ENCODE measurements at regions of chr7 and their contacts with region 1.

Region 1: GRCh38 chr7:51224811-51225612 is 91.6 kb downstream of the COBL start:
- DNase-seq: peak in 2 of 4 experiments; percentile 10 to 20
- ATAC-seq: peak; percentile 42; the same call in 1 of the 3 replicates
- H3K4me3 ChIP-seq: no peak overlapping the region
- H3K27ac ChIP-seq: no peak overlapping the region
- H3K4me1 ChIP-seq: no peaks in the 10 kb centered on the region
- H3K27me3 ChIP-seq: peaks cover 17 to 55% of the 10 kb centered on the region in 2 experiments
- CTCF ChIP-seq: peak; percentile 30 to 36 (median 32); a peak in 2 of 6 replicates
- EP300 ChIP-seq: no peak
- POLR2A ChIP-seq: no peak
- RAD21 ChIP-seq: peak in 1 of 2 experiments; percentile 27; a peak in 1 of 4 replicates

Region 2: GRCh38 chr7:51366930-51367613 is 142.1 kb after region 1 on chr7:
- CTCF ChIA-PET with region 1: interaction called, 3 read pairs
- POLR2A ChIA-PET with region 1: no interaction called
- in situ Hi-C with region 1: no loop called
- intact Hi-C with region 1: loop called (anchors 10 kb)
- DNase-seq: peak; percentile 66 to 78 (median 66)
- ATAC-seq: peak; percentile 97
- H3K4me3 ChIP-seq: no peak overlapping the region
- H3K27ac ChIP-seq: no peak overlapping the region
- H3K4me1 ChIP-seq: no peaks in the 10 kb centered on the region; a peak in 2 of 5 replicates
- H3K27me3 ChIP-seq: peaks cover 0 to 10% of the 10 kb centered on the region in 2 experiments; a peak in 1 of 5 replicates
- CTCF ChIP-seq: peak; percentile 74 to 82 (median 80)
- EP300 ChIP-seq: no peak
- POLR2A ChIP-seq: no peak
- RAD21 ChIP-seq: peak; percentile 69 to 77